ENCODE measurements at regions of chr18 and their contacts with region 1.

Region 1: DNA sequence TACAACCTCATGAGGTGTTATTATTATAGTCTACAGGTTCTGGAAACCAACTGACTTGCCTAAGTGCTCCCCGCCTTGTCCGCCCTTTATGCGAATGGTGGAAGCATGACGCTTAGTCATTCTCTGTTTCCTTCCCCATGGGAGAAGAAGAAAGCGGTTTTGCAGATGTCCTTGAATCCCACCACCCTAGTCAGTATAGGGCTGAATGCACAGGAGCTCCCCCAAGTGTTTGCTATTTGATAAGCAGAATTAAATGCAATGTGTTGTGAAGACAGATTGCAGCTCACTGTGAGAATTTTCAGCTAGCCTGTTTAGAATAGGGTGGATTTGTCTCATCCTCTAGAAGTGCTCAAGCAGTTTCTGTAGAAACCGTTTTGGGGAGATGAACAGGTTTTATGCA is 652.0 kb downstream of the DCC start:
- DNase-seq: peak in 1 of 2 experiments; percentile 15
- H3K4me3 ChIP-seq: no peak overlapping the region
- H3K4me3 Mint-ChIP-seq: no peak overlapping the region
- H3K27ac Mint-ChIP-seq: no peak overlapping the region
- H3K4me1 ChIP-seq: no peaks in the 10 kb centered on the region
- H3K4me1 Mint-ChIP-seq: no peaks in the 10 kb centered on the region
- H3K27me3 ChIP-seq: no peaks in the 10 kb centered on the region
- H3K27me3 Mint-ChIP-seq: no peaks in the 10 kb centered on the region
- CTCF ChIP-seq: peak; percentile 6 to 13

Region 2: DNA sequence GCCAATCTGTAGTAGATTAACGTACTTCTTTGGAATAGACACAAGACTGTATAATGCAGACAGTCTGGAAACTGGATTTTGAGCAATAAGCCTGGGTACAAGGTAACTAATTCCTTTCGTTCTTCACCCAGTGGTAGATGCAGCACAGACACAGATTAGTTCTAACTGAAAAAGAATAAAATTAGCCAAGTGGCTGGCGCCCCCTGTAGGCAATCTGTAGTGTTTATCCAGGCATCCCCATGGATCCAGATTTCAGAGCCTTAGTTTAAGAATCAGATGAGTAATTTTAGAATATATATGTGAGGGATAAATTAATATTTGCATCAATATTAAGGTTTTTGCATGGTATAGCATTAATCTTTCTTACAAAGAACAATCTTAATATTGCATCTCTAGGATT is 88.2 kb before region 1 on chr18:
- CTCF ChIA-PET with region 1: no interaction called
- POLR2A ChIA-PET with region 1: no interaction called
- intact Hi-C with region 1: loop called (anchors 10 kb)
- DNase-seq: peak in 1 of 2 experiments; percentile 15
- H3K4me3 ChIP-seq: no peak overlapping the region
- H3K4me3 Mint-ChIP-seq: no peak overlapping the region
- H3K27ac Mint-ChIP-seq: no peak overlapping the region
- H3K4me1 ChIP-seq: no peaks in the 10 kb centered on the region
- H3K4me1 Mint-ChIP-seq: no peaks in the 10 kb centered on the region
- H3K27me3 ChIP-seq: no peaks in the 10 kb centered on the region
- H3K27me3 Mint-ChIP-seq: no peaks in the 10 kb centered on the region
- CTCF ChIP-seq: peak; percentile 36 to 41

Region 3: DNA sequence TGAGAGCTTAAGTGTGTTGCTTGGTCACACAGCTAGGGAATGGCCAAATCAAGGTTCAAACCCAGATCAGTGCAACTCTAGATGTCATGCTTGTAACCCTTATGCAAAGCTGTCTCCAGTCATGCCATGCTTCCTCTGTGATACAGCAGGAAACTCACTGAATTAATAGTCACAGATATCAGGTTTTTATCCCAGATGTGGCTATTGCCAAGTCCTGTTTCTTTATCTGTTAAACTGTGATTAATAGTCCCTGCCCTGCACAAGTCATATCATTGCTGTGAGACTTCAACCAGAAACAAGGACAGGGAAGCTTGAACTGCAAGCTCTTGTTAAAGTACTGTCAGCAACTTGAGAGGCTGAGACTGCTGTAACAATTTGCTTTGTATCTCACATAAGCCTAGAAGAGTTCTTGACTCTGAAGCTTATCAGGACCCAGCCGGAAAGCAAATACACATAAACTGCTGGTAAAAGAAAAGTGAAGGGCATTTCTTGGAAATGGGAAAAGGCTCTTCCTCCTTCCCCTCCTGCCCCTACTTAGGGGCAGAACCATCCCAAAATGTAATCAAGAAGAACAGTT is 43.1 kb before region 1 on chr18:
- CTCF ChIA-PET with region 1: no interaction called
- POLR2A ChIA-PET with region 1: no interaction called
- intact Hi-C with region 1: loop called (anchors 5 kb)
- DNase-seq: no peak
- H3K4me3 ChIP-seq: no peak overlapping the region
- H3K4me3 Mint-ChIP-seq: no peak overlapping the region
- H3K27ac Mint-ChIP-seq: no peak overlapping the region
- H3K4me1 ChIP-seq: no peaks in the 10 kb centered on the region; the same call in 1 of the 2 replicates
- H3K4me1 Mint-ChIP-seq: no peaks in the 10 kb centered on the region
- H3K27me3 ChIP-seq: no peaks in the 10 kb centered on the region
- H3K27me3 Mint-ChIP-seq: no peaks in the 10 kb centered on the region
- CTCF ChIP-seq: no peak